Transverse colon (tissue), 4 donors: ENCODE measurements at regions of chr1 and their contacts with region 1.

Region 1: DNA sequence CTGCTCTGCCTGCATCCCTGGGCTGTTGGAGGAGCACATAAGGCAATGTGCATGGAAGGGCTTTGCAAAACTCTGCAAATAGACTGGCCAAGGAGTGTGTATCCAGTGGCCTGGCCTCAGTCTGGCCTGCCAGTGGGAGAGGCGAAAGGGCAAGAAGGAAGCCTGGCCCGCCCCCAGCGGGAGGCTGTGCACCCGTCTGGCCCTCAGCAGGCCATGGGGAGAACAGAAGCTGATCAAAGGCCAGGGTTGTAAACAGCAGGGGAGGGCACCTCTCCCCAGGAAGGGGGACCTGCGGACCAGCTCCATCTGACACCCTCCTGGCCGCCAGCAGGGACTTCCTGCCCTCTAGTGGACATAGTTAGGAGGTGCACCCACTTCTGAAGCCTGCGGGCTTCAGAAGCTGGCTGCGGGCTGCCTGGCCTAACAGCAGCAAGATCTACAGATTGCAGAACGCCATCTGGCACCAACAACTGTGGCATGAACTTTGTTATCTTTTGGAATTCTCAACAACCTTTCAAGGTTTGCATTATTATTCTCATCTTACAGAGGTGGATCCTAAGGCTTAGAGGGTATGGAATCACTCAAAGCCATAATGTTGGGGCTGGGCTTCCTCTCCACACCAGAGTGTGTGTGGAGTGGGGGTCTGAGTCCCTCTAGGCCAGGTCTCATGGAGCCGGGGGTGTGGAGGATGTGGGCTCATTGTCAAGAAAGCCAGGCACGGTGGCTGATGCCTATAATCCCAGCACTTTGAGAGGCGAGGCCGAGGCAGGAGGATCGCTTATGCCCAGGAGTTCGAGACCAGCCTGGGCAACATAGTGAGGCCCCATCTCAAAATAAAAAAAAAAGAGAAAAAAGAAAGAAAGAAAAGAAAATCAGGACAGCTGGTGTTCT is 18.9 kb upstream of the CDK18 start:
- DNase-seq: peak; percentile 67
- H3K4me3 ChIP-seq: no peak overlapping the region
- H3K27ac ChIP-seq: no peak overlapping the region
- H3K4me1 ChIP-seq: peaks cover 0 to 7% (median 2%) of the 10 kb centered on the region in 4 donors
- H3K27me3 ChIP-seq: peaks cover 22% of the 10 kb centered on the region
- CTCF ChIP-seq: peak; percentile 90 to 98 (median 97)
- EP300 ChIP-seq: no peak
- POLR2A ChIP-seq: no peak

Region 2: GRCh38 chr1:204924013-204924967 is 561.3 kb before region 1 on chr1:
- in situ Hi-C with region 1: no loop called
- intact Hi-C with region 1: no loop called
- DNase-seq: no peak
- H3K4me3 ChIP-seq: no peak overlapping the region
- H3K27ac ChIP-seq: no peak overlapping the region
- H3K4me1 ChIP-seq: peaks cover 0 to 22% (median 4%) of the 10 kb centered on the region in 4 donors
- H3K27me3 ChIP-seq: no peaks in the 10 kb centered on the region
- CTCF ChIP-seq: no peak
- EP300 ChIP-seq: no peak
- POLR2A ChIP-seq: no peak

Region 3: GRCh38 chr1:205335643-205336091 is 149.9 kb before region 1 on chr1:
- in situ Hi-C with region 1: loop called in 2 of 4 experiments (anchors 10 kb)
- intact Hi-C with region 1: no loop called
- DNase-seq: peak; percentile 90
- H3K4me3 ChIP-seq: no peak overlapping the region
- H3K27ac ChIP-seq: no peak overlapping the region
- H3K4me1 ChIP-seq: no peaks in the 10 kb centered on the region
- H3K27me3 ChIP-seq: no peaks in the 10 kb centered on the region
- CTCF ChIP-seq: peak; percentile 83 to 92 (median 91)
- EP300 ChIP-seq: no peak
- POLR2A ChIP-seq: no peak

Region 4: DNA sequence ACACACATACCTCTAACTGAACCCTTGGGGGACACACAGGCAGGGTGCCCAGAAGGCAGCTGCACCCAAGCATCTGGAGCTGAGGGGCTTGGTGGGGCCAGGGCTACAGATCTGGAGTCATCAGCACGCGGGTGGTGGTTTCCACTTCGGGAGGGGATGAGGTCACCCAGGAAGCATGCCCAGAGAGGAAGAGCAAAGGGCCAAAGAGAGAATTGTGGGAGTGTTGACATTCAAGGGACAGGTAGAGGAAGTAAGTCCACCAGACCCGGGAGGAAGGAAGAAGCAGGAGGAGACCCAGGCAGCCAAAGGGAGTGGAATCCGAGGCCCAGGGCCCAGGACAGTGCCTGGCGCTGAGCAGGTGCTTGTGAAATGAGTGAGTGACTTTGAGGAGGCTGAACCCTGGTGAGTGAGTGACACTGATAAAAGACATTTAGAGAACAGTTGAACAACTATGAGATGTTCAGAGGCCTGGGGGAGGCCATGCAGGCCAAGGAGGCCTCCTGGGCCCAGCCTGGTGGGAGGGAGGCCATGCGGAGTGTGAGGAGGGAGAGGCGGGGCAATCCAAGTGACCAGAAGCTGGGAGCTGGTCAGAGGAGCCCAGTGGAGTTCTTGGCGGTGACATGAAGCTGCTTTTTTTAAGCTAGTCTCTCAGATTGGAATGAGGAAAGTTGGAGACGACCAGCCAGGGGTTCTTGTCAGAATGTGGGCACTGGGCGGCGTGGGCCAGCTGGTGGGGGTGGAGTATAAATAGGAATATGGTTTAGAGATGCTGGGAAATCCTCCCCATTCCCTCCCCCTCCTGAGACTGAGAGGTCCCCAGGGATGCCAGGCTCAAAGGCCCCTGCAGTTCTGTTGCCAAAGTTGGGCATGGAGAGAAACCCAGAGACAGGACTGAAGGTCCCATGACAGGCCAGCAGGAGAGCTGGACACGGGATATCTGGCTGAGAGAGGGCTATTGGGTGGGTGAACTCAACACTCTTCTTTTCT is 26.8 kb after region 1 on chr1:
- in situ Hi-C with region 1: no loop called
- intact Hi-C with region 1: no loop called
- DNase-seq: no peak
- H3K4me3 ChIP-seq: no peak overlapping the region
- H3K27ac ChIP-seq: peak overlapping the region; percentile 28 to 51 (median 35)
- H3K4me1 ChIP-seq: peaks cover 14 to 34% (median 21%) of the 10 kb centered on the region in 4 donors
- H3K27me3 ChIP-seq: no peaks in the 10 kb centered on the region
- CTCF ChIP-seq: no peak
- EP300 ChIP-seq: no peak
- POLR2A ChIP-seq: no peak

Region 5: DNA sequence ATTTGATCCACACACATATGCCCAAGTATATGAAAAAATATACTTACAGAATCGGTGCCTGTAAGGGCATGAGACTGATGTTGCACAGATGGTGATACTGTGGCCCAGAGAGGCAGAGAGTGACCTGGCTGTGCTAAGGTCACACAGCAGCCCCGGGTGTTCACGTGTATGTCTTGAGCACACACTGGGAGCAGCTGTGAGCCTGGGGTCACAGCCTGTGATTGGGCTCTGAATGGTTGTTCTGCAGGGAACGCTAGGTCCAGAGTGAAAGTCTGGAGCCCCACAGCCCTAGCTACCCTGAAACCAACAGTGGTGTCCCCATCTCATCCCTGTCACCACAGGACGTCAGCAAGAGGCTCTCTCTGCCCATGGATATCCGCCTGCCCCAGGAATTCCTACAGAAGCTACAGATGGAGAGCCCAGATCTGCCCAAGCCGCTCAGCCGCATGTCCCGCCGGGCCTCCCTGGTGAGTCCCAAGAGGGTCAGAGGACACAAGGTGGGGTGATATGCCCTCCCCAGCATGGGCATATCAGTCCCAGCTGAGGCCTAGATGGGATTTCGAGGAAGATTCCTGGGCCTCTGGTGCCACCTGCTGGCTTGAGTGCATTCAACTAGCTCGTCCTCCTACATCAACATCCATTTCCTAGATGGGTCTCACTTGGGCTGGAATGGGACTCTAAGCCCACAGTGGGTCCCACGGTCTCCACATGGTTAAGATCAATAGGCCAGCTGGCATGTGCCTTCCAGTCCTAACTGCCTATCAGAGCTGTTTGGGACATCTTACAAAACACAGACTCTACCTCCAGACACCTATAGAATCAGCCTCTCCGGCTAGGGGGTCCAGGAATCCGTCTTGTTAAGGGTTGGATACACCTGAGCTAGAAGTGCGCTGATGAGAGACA is 38.6 kb after region 1 on chr1:
- in situ Hi-C with region 1: loop called in 1 of 4 experiments (anchors 5 kb)
- intact Hi-C with region 1: loop called (anchors 2 kb)
- DNase-seq: peak; percentile 84
- H3K4me3 ChIP-seq: no peak overlapping the region
- H3K27ac ChIP-seq: no peak overlapping the region
- H3K4me1 ChIP-seq: peaks cover 10 to 14% (median 12%) of the 10 kb centered on the region in 4 donors
- H3K27me3 ChIP-seq: no peaks in the 10 kb centered on the region
- CTCF ChIP-seq: peak; percentile 73 to 88 (median 75)
- EP300 ChIP-seq: no peak
- POLR2A ChIP-seq: no peak

Region 6: GRCh38 chr1:205610036-205610435 is 124.5 kb after region 1 on chr1:
- in situ Hi-C with region 1: no loop called
- intact Hi-C with region 1: no loop called
- DNase-seq: no peak
- H3K4me3 ChIP-seq: no peak overlapping the region
- H3K27ac ChIP-seq: no peak overlapping the region
- H3K4me1 ChIP-seq: peaks cover 0 to 17% (median 6%) of the 10 kb centered on the region in 4 donors
- H3K27me3 ChIP-seq: no peaks in the 10 kb centered on the region
- CTCF ChIP-seq: no peak
- EP300 ChIP-seq: no peak
- POLR2A ChIP-seq: no peak

Region 7: DNA sequence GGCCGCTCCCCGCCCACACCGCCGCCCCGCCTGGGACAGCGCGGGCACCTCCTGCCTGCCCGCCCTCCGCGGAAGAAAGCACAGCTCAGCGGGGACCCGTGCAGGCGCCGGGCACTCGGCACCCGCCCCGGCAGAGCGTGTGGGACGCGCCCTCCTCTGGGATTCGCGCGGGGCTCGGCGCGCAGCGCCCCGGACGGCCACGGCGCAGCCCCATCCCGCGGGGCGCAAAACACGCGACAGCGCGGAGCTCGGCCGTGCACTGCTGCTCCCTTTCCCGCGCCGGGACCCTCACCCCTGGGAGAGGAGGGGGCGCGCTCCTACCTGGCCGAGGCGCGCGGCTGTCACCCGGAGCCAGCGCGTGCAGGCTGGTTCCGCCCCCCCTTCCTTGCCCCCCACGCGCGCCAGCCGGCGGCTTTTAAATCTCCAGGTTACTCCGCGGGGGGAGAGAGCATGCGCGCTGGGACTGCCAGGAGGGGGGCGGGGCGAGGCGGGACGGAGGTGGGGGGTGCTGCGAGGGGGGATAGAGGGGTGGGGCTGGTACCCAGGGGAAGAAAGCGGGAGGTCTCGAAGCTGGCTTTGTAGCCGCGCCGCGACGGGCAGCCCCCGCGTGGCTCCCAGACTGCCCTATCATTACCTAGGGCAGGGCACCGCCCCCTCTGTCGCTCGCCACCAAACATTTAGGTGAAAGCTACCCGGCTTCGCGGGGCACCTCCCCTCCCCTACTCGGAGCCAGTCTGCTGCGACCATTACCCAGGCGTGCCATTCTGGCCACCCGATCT is 194.7 kb after region 1 on chr1 and contains the start of gene SLC45A3:
- in situ Hi-C with region 1: no loop called
- intact Hi-C with region 1: no loop called
- DNase-seq: peak; percentile 60
- H3K4me3 ChIP-seq: peak within 1 kb of the TSS; percentile 68 to 86 (median 73)
- H3K27ac ChIP-seq: peak within 1 kb of the TSS; percentile 67 to 87 (median 83)
- H3K4me1 ChIP-seq: peaks cover 0 to 49% (median 34%) of the 10 kb centered on the region in 4 donors
- H3K27me3 ChIP-seq: no peaks in the 10 kb centered on the region
- CTCF ChIP-seq: no peak
- EP300 ChIP-seq: no peak
- POLR2A ChIP-seq: no peak
- total RNA-seq, gene SLC45A3: 12.2 to 29.1 (median 17.0) TPM